ENCODE measurements at regions of chr20 and their contacts with region 1.

Region 1: GRCh38 chr20:33097001-33097400 is 17.6 kb downstream of the BPIFB4 start:
- DNase-seq: no peak
- H3K4me3 ChIP-seq: no peak overlapping the region
- H3K27ac ChIP-seq: no peak overlapping the region
- H3K4me1 ChIP-seq: no peaks in the 10 kb centered on the region
- H3K27me3 ChIP-seq: no peaks in the 10 kb centered on the region; the same call in 1 of the 2 replicates
- CTCF ChIP-seq: no peak

Region 2: GRCh38 chr20:32789896-32790750 is 306.9 kb before region 1 on chr20:
- CTCF ChIA-PET with region 1: no interaction called
- POLR2A ChIA-PET with region 1: no interaction called
- intact Hi-C with region 1: loop called (anchors 1 kb)
- DNase-seq: peak in 1 of 2 experiments; percentile 67
- H3K4me3 ChIP-seq: no peak overlapping the region
- H3K27ac ChIP-seq: no peak overlapping the region
- H3K4me1 ChIP-seq: no peaks in the 10 kb centered on the region
- H3K27me3 ChIP-seq: no peaks in the 10 kb centered on the region
- CTCF ChIP-seq: peak; percentile 99

Region 3: GRCh38 chr20:33211817-33212424 is 114.9 kb after region 1 on chr20:
- CTCF ChIA-PET with region 1: no interaction called
- POLR2A ChIA-PET with region 1: no interaction called
- intact Hi-C with region 1: loop called (anchors 1 kb)
- DNase-seq: peak; percentile 38 to 74
- H3K4me3 ChIP-seq: no peak overlapping the region
- H3K27ac ChIP-seq: no peak overlapping the region
- H3K4me1 ChIP-seq: no peaks in the 10 kb centered on the region
- H3K27me3 ChIP-seq: peaks cover 23% of the 10 kb centered on the region
- CTCF ChIP-seq: peak; percentile 70

Region 4: DNA sequence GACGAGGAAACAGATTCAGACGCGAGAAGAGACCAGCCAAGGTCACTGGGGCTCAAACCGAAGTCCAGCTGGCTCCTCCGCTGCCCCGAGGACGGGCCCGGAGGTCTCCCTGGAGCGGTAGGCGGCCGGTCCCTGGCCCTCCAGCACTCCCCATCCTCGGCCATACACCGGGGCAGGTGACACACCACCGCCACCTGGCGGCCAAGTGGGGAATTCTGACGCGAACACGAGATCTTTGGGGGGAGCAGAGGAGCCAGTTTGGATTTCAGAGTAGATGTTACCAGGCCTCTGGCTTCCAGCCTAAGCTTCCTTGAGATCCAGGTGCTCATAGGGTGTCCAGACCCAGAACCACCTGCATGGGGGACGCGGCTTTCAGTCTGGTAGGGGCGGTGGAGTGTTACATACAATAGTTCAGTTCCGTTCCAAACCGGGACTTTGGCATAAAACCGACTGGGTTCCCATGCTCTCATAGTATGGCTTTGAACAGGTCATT is 202.2 kb after region 1 on chr20:
- CTCF ChIA-PET with region 1: no interaction called
- POLR2A ChIA-PET with region 1: no interaction called
- intact Hi-C with region 1: loop called (anchors 1 kb)
- DNase-seq: peak; percentile 33 to 74
- H3K4me3 ChIP-seq: no peak overlapping the region
- H3K27ac ChIP-seq: no peak overlapping the region
- H3K4me1 ChIP-seq: no peaks in the 10 kb centered on the region
- H3K27me3 ChIP-seq: peaks cover 4% of the 10 kb centered on the region; the same call in 1 of the 2 replicates
- CTCF ChIP-seq: peak; percentile 98